MCF 10A (cell line): ENCODE measurements at regions of chr16 and their contacts with region 1.

Region 1: DNA sequence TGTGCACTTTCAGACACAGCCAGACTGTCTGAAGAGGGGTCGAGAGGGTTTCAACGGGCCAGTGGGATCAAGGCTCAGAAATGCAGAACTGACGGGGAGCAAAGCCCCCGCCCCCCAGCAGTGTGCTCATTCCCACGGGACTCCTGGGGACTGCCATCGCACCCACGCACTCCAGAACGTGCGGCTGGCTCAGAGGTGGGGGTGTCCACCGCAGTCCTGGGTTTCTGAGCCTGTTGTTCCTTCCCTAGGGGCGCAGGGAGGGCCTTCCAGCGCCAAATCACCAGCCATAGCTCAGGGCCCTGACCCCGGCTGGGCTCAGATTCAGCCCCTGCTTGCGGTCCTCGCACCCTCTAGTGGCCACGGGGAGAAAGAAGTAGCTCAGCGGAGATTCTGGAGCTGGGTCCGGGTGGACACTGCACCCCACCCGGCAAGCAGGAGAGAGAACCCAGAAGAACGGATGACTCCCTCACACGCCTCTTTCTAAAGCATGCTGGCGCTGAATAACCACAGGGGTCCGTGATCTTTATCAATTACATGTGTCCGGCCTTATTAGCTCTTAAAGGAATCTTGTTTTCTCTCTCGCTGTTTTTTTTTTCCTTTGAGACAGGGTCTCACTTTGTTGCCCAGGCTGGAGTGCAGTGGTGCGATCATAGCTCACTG is 45.0 kb upstream of the USP7 start:
- DNase-seq: peak; percentile 68
- H3K4me3 Mint-ChIP-seq: peak overlapping the region; percentile 22
- H3K27ac Mint-ChIP-seq: no peak overlapping the region
- H3K4me1 Mint-ChIP-seq: no peaks in the 10 kb centered on the region
- H3K27me3 Mint-ChIP-seq: no peaks in the 10 kb centered on the region
- CTCF ChIP-seq: peak; percentile 81

Region 2: DNA sequence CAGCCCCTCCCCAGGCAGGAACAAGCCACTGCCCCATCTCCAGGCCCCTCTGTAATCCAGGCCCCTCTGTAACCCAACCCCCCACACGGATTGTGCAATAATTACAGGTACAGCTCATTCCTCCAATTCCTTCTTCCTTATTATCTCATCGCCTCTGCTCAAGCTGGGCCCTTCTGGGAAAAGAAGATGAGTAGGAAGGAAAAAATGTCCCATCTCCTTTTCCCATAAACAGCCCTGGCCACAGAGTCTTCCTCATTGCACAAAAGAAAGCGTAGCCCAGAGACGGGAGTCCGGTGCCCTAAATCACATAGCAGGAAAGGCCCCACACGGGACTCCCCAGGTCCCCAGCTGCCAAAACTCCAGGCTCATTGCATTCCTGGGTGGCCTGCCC is 130.2 kb before region 1 on chr16:
- CTCF ChIA-PET with region 1: interaction called, 15 read pairs
- POLR2A ChIA-PET with region 1: no interaction called
- intact Hi-C with region 1: no loop called
- DNase-seq: peak; percentile 84
- H3K4me3 Mint-ChIP-seq: no peak overlapping the region
- H3K27ac Mint-ChIP-seq: peak overlapping the region; percentile 25
- H3K4me1 Mint-ChIP-seq: peaks cover 12% of the 10 kb centered on the region
- H3K27me3 Mint-ChIP-seq: no peaks in the 10 kb centered on the region
- CTCF ChIP-seq: no peak

Region 3: DNA sequence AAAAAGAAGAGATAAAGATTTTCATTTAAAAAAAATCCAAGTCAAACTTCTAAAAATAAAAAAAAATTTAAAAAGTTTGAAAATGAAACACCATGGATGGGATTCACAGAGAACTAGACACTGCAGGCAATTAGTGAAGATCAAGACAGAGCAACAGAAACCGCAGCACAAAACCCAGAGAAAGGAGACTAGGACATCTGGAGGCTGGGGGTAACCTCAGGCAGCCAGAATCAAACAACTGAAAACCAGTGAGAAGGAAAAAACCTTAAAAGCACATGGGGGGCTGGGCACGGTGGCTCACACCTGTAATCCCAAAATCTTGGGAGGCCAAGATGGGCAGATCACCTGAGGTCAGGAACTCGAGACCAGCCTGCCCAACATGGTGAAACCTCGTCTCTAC is 95.9 kb before region 1 on chr16:
- CTCF ChIA-PET with region 1: interaction called, 17 read pairs
- POLR2A ChIA-PET with region 1: no interaction called
- intact Hi-C with region 1: no loop called
- DNase-seq: no peak
- H3K4me3 Mint-ChIP-seq: no peak overlapping the region
- H3K27ac Mint-ChIP-seq: no peak overlapping the region
- H3K4me1 Mint-ChIP-seq: no peaks in the 10 kb centered on the region
- H3K27me3 Mint-ChIP-seq: no peaks in the 10 kb centered on the region
- CTCF ChIP-seq: no peak

Region 4: DNA sequence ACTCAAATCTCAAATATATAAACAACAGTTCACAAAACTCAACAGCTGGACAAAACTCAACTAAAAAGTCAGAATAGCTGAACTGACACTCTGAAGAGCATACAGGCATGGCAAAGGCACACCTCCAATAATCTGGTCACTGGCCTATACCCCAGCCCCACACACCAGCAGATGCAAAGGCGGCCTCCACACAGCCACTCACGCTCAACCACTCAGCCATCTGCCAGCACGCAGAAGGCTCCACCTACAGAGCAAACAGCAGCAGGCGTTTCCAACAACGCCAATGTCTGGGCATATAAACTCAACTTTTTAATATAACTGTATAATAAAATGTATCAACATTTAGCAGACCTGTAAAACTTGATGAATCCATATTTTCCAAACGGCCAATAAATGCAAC is 62.2 kb before region 1 on chr16:
- CTCF ChIA-PET with region 1: interaction called, 16 read pairs
- POLR2A ChIA-PET with region 1: no interaction called
- intact Hi-C with region 1: no loop called
- DNase-seq: no peak
- H3K4me3 Mint-ChIP-seq: no peak overlapping the region
- H3K27ac Mint-ChIP-seq: no peak overlapping the region
- H3K4me1 Mint-ChIP-seq: peaks cover 18% of the 10 kb centered on the region
- H3K27me3 Mint-ChIP-seq: no peaks in the 10 kb centered on the region
- CTCF ChIP-seq: no peak

Region 5: GRCh38 chr16:8972843-8973586 is 35.7 kb before region 1 on chr16:
- CTCF ChIA-PET with region 1: interaction called, 22 read pairs
- POLR2A ChIA-PET with region 1: no interaction called
- intact Hi-C with region 1: no loop called
- DNase-seq: no peak
- H3K4me3 Mint-ChIP-seq: no peak overlapping the region
- H3K27ac Mint-ChIP-seq: no peak overlapping the region
- H3K4me1 Mint-ChIP-seq: no peaks in the 10 kb centered on the region
- H3K27me3 Mint-ChIP-seq: no peaks in the 10 kb centered on the region
- CTCF ChIP-seq: no peak

Region 6: DNA sequence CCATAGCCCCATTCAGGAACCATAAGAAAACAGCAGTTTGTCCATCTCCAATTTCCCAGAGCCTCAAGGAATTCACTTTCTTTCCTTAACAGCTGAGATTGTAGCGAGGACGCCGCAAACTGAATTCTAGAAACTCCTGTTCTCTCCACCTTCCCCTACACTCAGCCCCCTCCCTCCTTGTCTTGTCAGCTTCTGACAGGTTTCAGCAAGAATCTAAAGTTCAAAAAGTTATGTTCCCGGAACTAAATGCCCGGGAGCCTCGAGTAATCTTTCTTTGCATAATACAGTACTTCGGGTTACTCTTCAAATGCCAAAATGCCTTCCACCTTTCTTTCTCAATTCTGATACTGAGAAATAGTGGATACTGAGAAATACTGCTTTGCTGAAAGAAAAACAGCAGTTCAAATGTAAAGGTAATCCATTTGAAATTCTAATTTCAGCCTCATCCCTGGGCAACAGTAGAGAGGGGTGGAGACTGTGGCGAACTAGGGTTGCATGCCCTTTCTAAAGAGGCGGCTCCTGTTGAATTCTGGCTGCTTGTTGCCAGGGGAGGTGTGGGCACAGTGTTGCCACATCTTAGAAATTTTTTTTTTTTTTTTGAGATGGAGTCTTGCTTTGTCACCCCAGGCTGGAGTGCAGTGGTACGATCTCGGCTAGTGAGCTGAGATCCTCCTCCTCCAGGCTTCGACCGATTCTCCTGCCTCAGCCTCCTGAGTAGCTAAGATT is 18.5 kb after region 1 on chr16:
- CTCF ChIA-PET with region 1: interaction called, 48 read pairs
- POLR2A ChIA-PET with region 1: no interaction called
- intact Hi-C with region 1: no loop called
- DNase-seq: peak; percentile 29
- H3K4me3 Mint-ChIP-seq: no peak overlapping the region
- H3K27ac Mint-ChIP-seq: no peak overlapping the region
- H3K4me1 Mint-ChIP-seq: peaks cover 6% of the 10 kb centered on the region
- H3K27me3 Mint-ChIP-seq: no peaks in the 10 kb centered on the region
- CTCF ChIP-seq: no peak